ENCODE measurements at regions of chr1 and their contacts with region 1.

Region 1: DNA sequence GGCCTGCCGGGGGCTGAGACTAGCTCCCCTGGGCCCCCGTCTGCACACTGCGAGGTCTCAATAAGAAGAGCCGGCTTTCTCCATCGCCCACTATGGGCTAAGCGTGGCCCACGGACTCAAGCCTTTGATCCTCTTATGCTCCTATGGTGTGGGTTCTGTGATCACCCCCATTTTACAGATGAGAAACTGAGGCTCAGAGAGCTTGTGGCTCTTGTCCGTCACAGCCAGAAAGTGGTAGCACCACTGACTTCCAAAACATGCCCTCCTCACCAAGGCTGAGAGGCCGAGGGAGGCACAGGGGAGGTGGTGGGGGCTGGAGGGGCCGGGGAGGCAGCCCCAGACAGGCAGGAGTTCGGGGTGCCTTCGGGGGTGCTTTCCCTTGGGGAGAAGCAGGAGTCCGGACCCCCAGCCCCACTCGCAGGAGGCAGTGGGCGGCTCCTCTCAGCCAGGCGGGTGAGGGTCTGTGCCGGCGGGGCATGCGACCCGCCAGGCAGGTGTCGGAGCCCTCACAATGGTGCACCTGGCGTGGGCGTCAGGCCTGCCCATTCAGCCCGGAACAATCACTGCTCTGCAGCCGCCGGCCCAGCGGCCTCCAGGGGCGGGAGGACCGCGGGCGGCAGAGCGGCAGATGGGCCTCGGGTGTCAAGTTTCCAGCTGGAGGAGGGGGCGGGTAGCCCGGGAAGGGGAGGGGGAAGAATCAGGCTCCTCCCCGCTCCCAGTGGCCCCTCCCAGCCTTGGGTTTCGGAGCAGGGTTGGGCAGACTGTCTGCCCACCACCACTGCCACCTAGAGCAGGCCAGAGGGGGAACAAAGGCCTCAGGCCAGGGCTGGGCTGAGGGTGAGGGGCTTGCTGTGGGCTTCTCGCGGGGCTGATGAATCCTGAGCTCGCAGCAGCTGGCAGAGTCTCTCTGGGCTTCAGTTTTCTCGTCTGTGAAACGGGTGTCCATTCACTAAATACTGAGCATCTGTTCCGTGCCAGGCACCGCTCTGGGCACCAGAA is 39.3 kb upstream of the CASZ1 start:
- DNase-seq: no peak
- ATAC-seq: peak; percentile 35; the same call in 1 of the 2 replicates
- H3K4me3 ChIP-seq: no peak overlapping the region
- H3K27ac ChIP-seq: no peak overlapping the region
- H3K4me1 ChIP-seq: no peaks in the 10 kb centered on the region
- H3K27me3 ChIP-seq: no peaks in the 10 kb centered on the region
- CTCF ChIP-seq: no peak

Region 2: DNA sequence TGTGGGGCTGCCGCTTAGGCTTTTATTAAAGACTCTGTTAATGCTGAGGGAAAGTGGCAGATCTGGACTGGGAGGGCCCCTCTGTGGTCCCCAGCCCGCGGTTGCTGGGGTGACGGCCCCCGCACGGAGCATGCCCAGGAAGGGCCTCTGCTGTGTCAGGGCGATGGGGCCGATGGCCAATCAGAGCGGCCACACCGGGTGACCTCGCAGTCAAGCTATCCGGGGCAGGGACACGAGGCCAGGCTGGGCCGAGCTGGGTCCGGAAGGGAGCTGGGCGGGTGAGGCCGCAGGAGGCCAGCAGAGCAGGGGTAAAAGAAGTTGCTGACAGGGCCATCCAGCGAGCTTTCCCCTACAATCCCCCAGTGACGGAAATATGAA is 184.3 kb before region 1 on chr1:
- CTCF ChIA-PET with region 1: no interaction called
- POLR2A ChIA-PET with region 1: interaction called, 11 read pairs
- in situ Hi-C with region 1: no loop called
- intact Hi-C with region 1: no loop called
- DNase-seq: no peak
- ATAC-seq: 0 out of 2 replicates have a peak, but pooled peaks have one; percentile 8
- H3K4me3 ChIP-seq: no peak overlapping the region
- H3K27ac ChIP-seq: no peak overlapping the region
- H3K4me1 ChIP-seq: no peaks in the 10 kb centered on the region
- H3K27me3 ChIP-seq: no peaks in the 10 kb centered on the region
- CTCF ChIP-seq: no peak

Measured in Panc1 (cell line).